Thyroid gland (tissue), 4 donors: ENCODE measurements at regions of chr22 and their contacts with region 1.

Region 1: GRCh38 chr22:50582562-50583293 is at the start of gene CHKB:
- DNase-seq: peak; percentile 99 to 100
- H3K4me3 ChIP-seq: peak within 1 kb of the TSS; percentile 75 to 95 (median 80)
- H3K27ac ChIP-seq: peak within 1 kb of the TSS; percentile 95 to 98 (median 96)
- H3K4me1 ChIP-seq: peaks cover 13 to 35% of the 10 kb centered on the region in 2 donors
- H3K27me3 ChIP-seq: no peaks in the 10 kb centered on the region
- CTCF ChIP-seq: no peak
- POLR2A ChIP-seq: peak; percentile 64 to 94
- total RNA-seq, gene CHKB: 49.1 to 96.9 (median 67.8) TPM

Region 2: DNA sequence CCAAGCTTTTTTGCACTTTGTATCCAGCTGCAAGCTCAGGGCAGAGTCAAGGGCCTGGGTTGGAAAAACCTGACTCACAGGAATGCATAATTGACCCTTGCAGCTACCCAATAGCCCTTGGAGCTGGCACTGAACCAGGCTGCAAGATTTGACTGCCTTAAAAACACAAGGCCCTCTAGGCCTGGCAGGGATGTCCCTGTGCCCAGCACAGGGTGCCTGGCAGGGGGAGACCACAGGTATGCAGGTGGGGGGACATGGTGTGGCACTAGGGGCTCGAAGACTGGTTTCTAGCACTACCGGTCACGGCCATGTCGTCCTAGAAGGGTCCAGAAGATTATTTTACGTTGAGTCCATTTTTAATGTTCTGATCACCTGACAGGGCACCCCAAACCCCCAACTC is 138.1 kb before region 1 on chr22:
- intact Hi-C with region 1: no loop called
- DNase-seq: peak; percentile 98 to 99
- H3K4me3 ChIP-seq: no peak overlapping the region
- H3K27ac ChIP-seq: peak overlapping the region; percentile 62 to 86 (median 77)
- H3K4me1 ChIP-seq: peaks cover 32 to 34% of the 10 kb centered on the region in 2 donors
- H3K27me3 ChIP-seq: no peaks in the 10 kb centered on the region
- CTCF ChIP-seq: no peak
- POLR2A ChIP-seq: no peak

Region 3: GRCh38 chr22:50524676-50525389 is 57.9 kb before region 1 on chr22:
- intact Hi-C with region 1: loop called (anchors 5 kb)
- DNase-seq: peak; percentile 59 to 66
- H3K4me3 ChIP-seq: peak overlapping the region; percentile 41 to 83 (median 66)
- H3K27ac ChIP-seq: peak overlapping the region; percentile 53 to 97 (median 56)
- H3K4me1 ChIP-seq: peaks cover 13 to 28% of the 10 kb centered on the region in 2 donors
- H3K27me3 ChIP-seq: no peaks in the 10 kb centered on the region
- CTCF ChIP-seq: no peak
- POLR2A ChIP-seq: no peak

Region 4: GRCh38 chr22:50641696-50642607 is 59.2 kb after region 1 on chr22:
- intact Hi-C with region 1: no loop called
- DNase-seq: peak in 1 of 2 donors; percentile 41
- H3K4me3 ChIP-seq: no peak overlapping the region
- H3K27ac ChIP-seq: peak overlapping the region in 1 of 3 donors; percentile 14
- H3K4me1 ChIP-seq: peaks cover 15 to 18% of the 10 kb centered on the region in 2 donors
- H3K27me3 ChIP-seq: no peaks in the 10 kb centered on the region
- CTCF ChIP-seq: peak in 3 of 6 experiments; percentile 22 to 48 (median 33)
- POLR2A ChIP-seq: no peak